ENCODE measurements at regions of chr10 and their contacts with region 1.

Region 1: DNA sequence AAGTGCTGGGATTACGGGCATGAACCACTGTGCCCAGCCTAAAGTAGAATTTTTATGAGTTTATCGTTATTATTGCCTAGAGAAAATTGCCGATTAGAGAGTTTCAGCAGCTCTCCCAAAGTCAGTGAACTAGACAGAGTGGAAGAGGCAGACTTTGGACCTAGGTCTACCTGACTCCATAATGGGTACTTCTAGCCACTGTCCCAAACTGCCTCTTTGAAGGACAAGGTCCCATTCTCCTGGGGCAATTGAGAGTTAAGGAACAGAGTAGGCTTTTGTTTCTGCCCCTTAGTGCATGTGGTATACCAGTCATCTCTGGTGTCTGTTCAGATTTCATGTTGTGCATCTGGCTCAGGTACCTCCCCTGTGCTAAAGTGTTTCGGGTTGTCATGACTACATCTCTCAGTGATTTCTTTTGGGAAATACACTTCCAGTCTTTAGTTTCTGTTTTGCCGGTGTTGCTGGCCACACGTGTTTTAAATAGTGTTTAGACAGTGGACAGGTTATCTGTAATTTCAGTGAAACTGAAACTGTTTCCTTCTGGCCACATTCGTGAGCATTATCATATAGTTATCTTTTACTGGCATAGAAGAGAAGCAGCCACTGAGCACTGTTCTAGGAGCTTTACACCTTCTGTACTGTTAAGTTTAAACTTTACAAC is 4.7 kb downstream of the TMEM236 start:
- DNase-seq: no peak
- H3K4me3 ChIP-seq: no peak overlapping the region
- H3K27ac ChIP-seq: no peak overlapping the region
- H3K4me1 ChIP-seq: no peaks in the 10 kb centered on the region
- H3K27me3 ChIP-seq: no peaks in the 10 kb centered on the region
- CTCF ChIP-seq: no peak
- EP300 ChIP-seq: no peak
- RAD21 ChIP-seq: no peak

Region 2: GRCh38 chr10:17742918-17743317 is 13.8 kb before region 1 on chr10:
- CTCF ChIA-PET with region 1: interaction called, 10 read pairs
- POLR2A ChIA-PET with region 1: no interaction called
- DNase-seq: peak; percentile 49
- H3K4me3 ChIP-seq: peak overlapping the region in 1 of 2 experiments; percentile 7; a peak in 1 of 4 replicates
- H3K27ac ChIP-seq: no peak overlapping the region
- H3K4me1 ChIP-seq: no peaks in the 10 kb centered on the region
- H3K27me3 ChIP-seq: no peaks in the 10 kb centered on the region
- CTCF ChIP-seq: peak; percentile 91
- EP300 ChIP-seq: no peak
- RAD21 ChIP-seq: peak; percentile 63

Region 3: GRCh38 chr10:17771017-17771416 is 14.3 kb after region 1 on chr10:
- CTCF ChIA-PET with region 1: no interaction called
- POLR2A ChIA-PET with region 1: no interaction called
- DNase-seq: no peak
- H3K4me3 ChIP-seq: no peak overlapping the region
- H3K27ac ChIP-seq: no peak overlapping the region
- H3K4me1 ChIP-seq: no peaks in the 10 kb centered on the region
- H3K27me3 ChIP-seq: no peaks in the 10 kb centered on the region
- CTCF ChIP-seq: no peak
- EP300 ChIP-seq: no peak
- RAD21 ChIP-seq: no peak

Region 4: GRCh38 chr10:17801507-17801906 is 44.8 kb after region 1 on chr10:
- CTCF ChIA-PET with region 1: no interaction called
- POLR2A ChIA-PET with region 1: no interaction called
- DNase-seq: no peak
- H3K4me3 ChIP-seq: no peak overlapping the region
- H3K27ac ChIP-seq: no peak overlapping the region
- H3K4me1 ChIP-seq: no peaks in the 10 kb centered on the region; a peak in 1 of 4 replicates
- H3K27me3 ChIP-seq: no peaks in the 10 kb centered on the region
- CTCF ChIP-seq: peak; percentile 22; the same call in 1 of the 2 replicates
- EP300 ChIP-seq: no peak
- RAD21 ChIP-seq: no peak